SK-N-SH (cell line): ENCODE measurements at regions of chr6 and their contacts with region 1.

Region 1: GRCh38 chr6:152642989-152643388 is 5.8 kb upstream of the SYNE1 start:
- DNase-seq: peak; percentile 61
- H3K4me3 ChIP-seq: no peak overlapping the region
- H3K27ac ChIP-seq: no peak overlapping the region
- H3K4me1 ChIP-seq: no peaks in the 10 kb centered on the region; a peak in 1 of 4 replicates
- H3K27me3 ChIP-seq: no peaks in the 10 kb centered on the region
- CTCF ChIP-seq: peak; percentile 66
- EP300 ChIP-seq: no peak
- RAD21 ChIP-seq: peak; percentile 89

Region 2: GRCh38 chr6:152386131-152386530 is 256.9 kb before region 1 on chr6:
- CTCF ChIA-PET with region 1: no interaction called
- POLR2A ChIA-PET with region 1: no interaction called
- DNase-seq: no peak
- H3K4me3 ChIP-seq: no peak overlapping the region
- H3K27ac ChIP-seq: no peak overlapping the region
- H3K4me1 ChIP-seq: peaks cover 0 to 2% of the 10 kb centered on the region in 2 experiments; a peak in 2 of 4 replicates
- H3K27me3 ChIP-seq: no peaks in the 10 kb centered on the region
- CTCF ChIP-seq: no peak
- EP300 ChIP-seq: no peak
- RAD21 ChIP-seq: no peak

Region 3: DNA sequence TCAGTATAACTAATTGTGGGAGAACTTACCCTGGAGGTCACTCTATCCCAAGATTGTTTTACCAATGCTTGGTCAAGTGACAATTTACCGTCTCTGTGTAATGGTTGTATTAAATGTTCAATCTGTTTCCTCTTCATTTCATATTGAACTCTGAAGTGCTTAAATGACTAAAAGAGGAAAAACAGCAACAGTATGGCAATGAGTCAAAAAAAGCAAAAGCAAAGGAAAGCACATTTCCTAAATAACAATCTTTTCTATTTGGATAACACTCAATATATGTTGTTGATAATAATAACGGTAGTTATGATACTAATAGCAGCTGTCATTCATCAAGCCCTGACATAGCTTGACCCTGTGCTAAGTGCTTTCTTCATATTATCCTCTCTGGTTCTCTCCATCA is 158.2 kb before region 1 on chr6:
- CTCF ChIA-PET with region 1: interaction called, 31 read pairs
- POLR2A ChIA-PET with region 1: no interaction called
- DNase-seq: no peak
- H3K4me3 ChIP-seq: no peak overlapping the region
- H3K27ac ChIP-seq: no peak overlapping the region
- H3K4me1 ChIP-seq: no peaks in the 10 kb centered on the region
- H3K27me3 ChIP-seq: no peaks in the 10 kb centered on the region
- CTCF ChIP-seq: no peak
- EP300 ChIP-seq: no peak
- RAD21 ChIP-seq: no peak

Region 4: DNA sequence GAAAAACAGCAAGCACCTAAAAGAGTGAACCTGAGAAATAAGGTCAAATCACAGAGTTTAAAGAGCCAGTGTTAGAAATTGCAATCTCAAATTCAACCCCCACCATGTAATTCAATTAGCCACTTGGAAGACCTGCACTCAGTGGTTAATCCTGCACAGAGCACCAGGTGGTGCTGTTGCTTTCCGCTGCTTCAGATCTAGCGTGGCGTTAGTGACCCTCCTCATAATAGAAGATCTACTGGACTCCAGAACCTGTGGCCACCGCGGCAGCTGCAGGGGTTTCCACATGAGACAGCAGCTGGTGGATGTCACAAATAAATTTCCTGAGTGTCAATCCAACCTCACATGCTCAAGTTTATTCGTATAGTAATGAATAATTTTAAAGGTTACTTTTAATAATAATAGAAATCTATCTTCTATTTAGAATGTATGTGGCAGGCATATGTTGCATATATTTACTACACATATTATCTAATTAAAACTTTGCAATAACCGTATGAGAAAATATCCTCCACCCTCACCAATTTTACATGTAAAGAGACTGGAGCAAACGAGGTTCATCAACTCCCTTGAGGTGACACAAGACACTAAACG is 90.3 kb before region 1 on chr6:
- CTCF ChIA-PET with region 1: interaction called, 63 read pairs
- POLR2A ChIA-PET with region 1: interaction called, 3 read pairs
- DNase-seq: peak; percentile 55
- H3K4me3 ChIP-seq: peak overlapping the region in 1 of 2 experiments; percentile 49; a peak in 1 of 4 replicates
- H3K27ac ChIP-seq: no peak overlapping the region
- H3K4me1 ChIP-seq: peaks cover 0 to 5% of the 10 kb centered on the region in 2 experiments; a peak in 2 of 4 replicates
- H3K27me3 ChIP-seq: no peaks in the 10 kb centered on the region
- CTCF ChIP-seq: peak; percentile 70
- EP300 ChIP-seq: peak in 1 of 2 experiments; percentile 38; a peak in 1 of 4 replicates
- RAD21 ChIP-seq: peak; percentile 88

Region 5: GRCh38 chr6:152575621-152576150 is 67.3 kb before region 1 on chr6:
- CTCF ChIA-PET with region 1: interaction called, 10 read pairs
- POLR2A ChIA-PET with region 1: no interaction called
- DNase-seq: no peak
- H3K4me3 ChIP-seq: no peak overlapping the region
- H3K27ac ChIP-seq: peak overlapping the region in 1 of 2 experiments; percentile 43; a peak in 1 of 4 replicates
- H3K4me1 ChIP-seq: peaks cover 0 to 16% of the 10 kb centered on the region in 2 experiments; a peak in 2 of 4 replicates
- H3K27me3 ChIP-seq: no peaks in the 10 kb centered on the region
- CTCF ChIP-seq: no peak
- EP300 ChIP-seq: no peak
- RAD21 ChIP-seq: no peak

Region 6: GRCh38 chr6:152605342-152605741 is 37.6 kb before region 1 on chr6:
- CTCF ChIA-PET with region 1: no interaction called
- POLR2A ChIA-PET with region 1: no interaction called
- DNase-seq: no peak
- H3K4me3 ChIP-seq: no peak overlapping the region
- H3K27ac ChIP-seq: peak overlapping the region in 1 of 2 experiments; percentile 67; a peak in 2 of 4 replicates
- H3K4me1 ChIP-seq: no peaks in the 10 kb centered on the region; a peak in 1 of 4 replicates
- H3K27me3 ChIP-seq: no peaks in the 10 kb centered on the region
- CTCF ChIP-seq: no peak
- EP300 ChIP-seq: no peak
- RAD21 ChIP-seq: no peak

Region 7: GRCh38 chr6:152630832-152631231 is 12.2 kb before region 1 on chr6:
- CTCF ChIA-PET with region 1: interaction called, 11 read pairs
- POLR2A ChIA-PET with region 1: no interaction called
- DNase-seq: no peak
- H3K4me3 ChIP-seq: no peak overlapping the region
- H3K27ac ChIP-seq: no peak overlapping the region
- H3K4me1 ChIP-seq: peaks cover 0 to 3% of the 10 kb centered on the region in 2 experiments; a peak in 2 of 4 replicates
- H3K27me3 ChIP-seq: no peaks in the 10 kb centered on the region
- CTCF ChIP-seq: no peak
- EP300 ChIP-seq: no peak
- RAD21 ChIP-seq: no peak

Region 8: DNA sequence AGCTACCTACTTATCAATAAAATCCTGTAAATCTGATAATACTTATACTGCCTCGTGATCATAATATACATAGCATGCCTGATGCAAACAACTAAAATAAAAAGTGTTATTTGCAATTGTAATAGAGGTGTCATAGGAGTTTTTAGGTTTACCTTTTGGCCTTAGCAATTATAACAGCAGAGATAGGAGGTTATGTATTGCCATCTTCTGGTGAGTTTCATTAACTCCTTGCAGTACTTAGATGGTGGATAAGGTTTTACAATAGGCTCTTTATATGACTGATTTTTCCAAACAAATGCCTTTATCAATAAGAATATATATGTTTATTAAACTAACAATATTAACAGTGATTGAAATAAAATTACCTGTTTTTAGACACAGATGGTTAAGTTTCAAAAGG is 26.9 kb after region 1 on chr6:
- CTCF ChIA-PET with region 1: interaction called, 13 read pairs
- POLR2A ChIA-PET with region 1: no interaction called
- DNase-seq: peak; percentile 27
- H3K4me3 ChIP-seq: no peak overlapping the region
- H3K27ac ChIP-seq: peak overlapping the region in 1 of 2 experiments; percentile 92; a peak in 2 of 4 replicates
- H3K4me1 ChIP-seq: peaks cover 0 to 9% of the 10 kb centered on the region in 2 experiments; a peak in 2 of 4 replicates
- H3K27me3 ChIP-seq: no peaks in the 10 kb centered on the region
- CTCF ChIP-seq: peak; percentile 69
- EP300 ChIP-seq: no peak
- RAD21 ChIP-seq: peak; percentile 78